Activated CD4-positive, alpha-beta memory T cell treated with anti-CD3 and anti-CD28 coated beads for 36 hours (primary cell): ENCODE measurements at regions of chr2 and their contacts with region 1.

Region 1: DNA sequence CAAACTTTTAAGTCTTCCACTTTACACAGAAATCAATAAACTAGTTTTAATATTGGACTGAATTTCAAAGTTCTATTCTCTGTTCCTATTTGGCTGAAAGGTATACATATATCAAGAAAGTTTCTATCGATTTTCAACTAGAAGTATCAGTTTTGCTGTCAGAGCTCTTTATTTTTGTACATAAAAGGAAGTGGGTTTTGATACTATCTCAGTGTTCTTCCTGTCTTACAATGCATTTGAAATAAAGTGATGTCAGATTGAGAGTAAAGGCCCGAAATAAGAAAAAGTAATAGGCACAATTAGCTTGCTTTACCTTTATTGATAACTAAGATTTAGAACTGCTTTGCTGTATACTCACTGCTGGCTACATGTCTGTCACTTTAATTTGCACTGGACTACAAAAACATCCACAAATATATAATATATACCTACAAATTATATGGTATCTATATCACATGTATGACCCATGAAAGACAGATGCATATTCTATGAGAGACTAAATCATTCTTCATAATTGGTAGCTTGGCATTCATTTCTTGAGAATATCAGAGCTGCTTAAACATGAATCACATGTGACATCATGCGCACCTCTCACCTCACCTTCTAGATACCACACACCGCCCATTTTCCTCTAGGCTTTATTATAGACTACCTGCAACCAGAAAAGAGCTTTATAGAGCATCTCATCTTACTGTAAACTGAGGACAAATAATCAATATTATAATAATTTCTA is 83.6 kb downstream of the ASXL2 start:
- DNase-seq: no peak
- H3K4me3 Mint-ChIP-seq: peak overlapping the region; percentile 66
- H3K27ac Mint-ChIP-seq: peak overlapping the region; percentile 81
- H3K4me1 Mint-ChIP-seq: peaks cover 77% of the 10 kb centered on the region
- H3K27me3 Mint-ChIP-seq: no peaks in the 10 kb centered on the region

Region 2: DNA sequence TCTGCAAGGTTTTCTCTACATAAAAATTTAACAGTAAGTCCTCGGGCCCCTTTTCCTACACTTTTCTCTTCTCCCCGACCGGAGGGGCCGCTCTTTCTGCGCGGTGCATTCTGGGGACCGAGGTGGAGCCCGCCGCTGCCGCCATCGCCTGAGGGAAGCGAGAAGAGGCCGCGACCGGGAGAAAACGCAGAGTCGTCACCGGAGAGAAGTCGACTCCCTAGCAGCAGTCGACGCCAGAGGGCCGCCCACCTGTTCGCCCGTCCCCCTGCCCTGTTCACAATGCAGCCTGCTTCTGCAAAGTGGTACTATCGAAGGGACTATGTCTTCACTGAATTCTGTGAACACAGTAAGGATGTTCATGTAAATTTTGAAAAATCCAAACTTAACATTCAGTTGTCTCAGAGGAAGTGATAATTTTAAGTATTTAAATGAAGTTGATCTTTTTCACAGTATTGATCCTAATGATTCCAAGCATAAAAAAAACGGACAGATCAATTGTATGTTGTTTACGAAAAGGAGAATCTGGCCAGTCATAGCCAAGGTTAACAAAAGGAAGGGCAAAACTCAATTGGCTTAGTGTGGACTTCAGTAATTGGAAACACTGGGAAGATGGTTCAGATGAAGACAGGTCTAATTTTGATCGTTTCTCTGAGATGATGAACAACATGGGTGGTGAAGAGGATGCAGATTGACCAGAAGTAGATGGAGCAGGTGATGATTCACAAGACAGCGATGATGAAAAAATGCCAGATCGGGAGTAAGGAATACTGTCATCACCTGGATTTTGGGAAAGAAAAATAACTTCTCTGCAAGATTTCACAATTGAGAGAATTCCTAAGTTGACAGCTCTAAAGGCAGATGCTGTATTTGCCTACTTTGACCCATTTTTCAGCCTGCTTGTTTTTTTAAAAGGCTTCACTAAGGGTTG is 27.7 kb after region 1 on chr2:
- CTCF ChIA-PET with region 1: interaction called, 9 read pairs
- POLR2A ChIA-PET with region 1: interaction called, 26 read pairs
- intact Hi-C with region 1: loop called (anchors 1 kb)
- DNase-seq: peak; percentile 77
- H3K4me3 Mint-ChIP-seq: peak overlapping the region; percentile 68
- H3K27ac Mint-ChIP-seq: peak overlapping the region; percentile 51
- H3K4me1 Mint-ChIP-seq: peaks cover 61% of the 10 kb centered on the region
- H3K27me3 Mint-ChIP-seq: peaks cover 1% of the 10 kb centered on the region

Region 3: DNA sequence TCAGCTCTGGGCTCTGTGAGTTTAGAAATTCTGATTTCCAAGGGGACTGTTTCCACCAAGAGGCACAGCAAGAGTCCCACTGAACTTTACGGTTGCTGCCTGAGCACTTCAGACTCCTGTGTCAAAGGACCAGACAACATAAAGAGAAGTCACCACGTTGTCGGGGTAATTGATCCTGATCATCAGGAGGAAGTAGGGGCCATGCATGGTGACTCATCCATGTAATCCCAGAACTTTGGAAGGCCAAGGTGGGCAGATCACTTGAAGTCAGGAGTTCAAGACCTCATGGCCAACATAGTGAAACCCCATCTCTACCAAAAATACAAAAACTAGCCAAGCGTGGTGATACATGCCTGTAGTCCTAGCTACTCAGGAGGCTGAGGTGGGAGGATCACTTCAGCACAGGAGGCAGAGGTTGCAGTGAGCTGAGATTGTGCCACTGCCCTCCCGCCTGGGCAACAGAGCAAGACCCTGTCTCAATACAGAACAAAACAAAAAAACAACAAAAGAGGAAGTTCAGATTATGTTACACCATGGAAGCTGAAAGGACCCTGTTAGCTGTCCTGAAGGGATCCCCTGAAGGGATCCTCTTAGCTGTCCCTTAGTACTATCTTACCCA is 93.0 kb after region 1 on chr2:
- CTCF ChIA-PET with region 1: no interaction called
- POLR2A ChIA-PET with region 1: no interaction called
- intact Hi-C with region 1: no loop called
- DNase-seq: no peak
- H3K4me3 Mint-ChIP-seq: no peak overlapping the region
- H3K27ac Mint-ChIP-seq: no peak overlapping the region
- H3K4me1 Mint-ChIP-seq: no peaks in the 10 kb centered on the region
- H3K27me3 Mint-ChIP-seq: peaks cover 1% of the 10 kb centered on the region

Region 4: GRCh38 chr2:26214759-26215158 is 420.0 kb after region 1 on chr2:
- CTCF ChIA-PET with region 1: no interaction called
- POLR2A ChIA-PET with region 1: no interaction called
- intact Hi-C with region 1: no loop called
- DNase-seq: no peak
- H3K4me3 Mint-ChIP-seq: no peak overlapping the region
- H3K27ac Mint-ChIP-seq: no peak overlapping the region
- H3K4me1 Mint-ChIP-seq: no peaks in the 10 kb centered on the region
- H3K27me3 Mint-ChIP-seq: no peaks in the 10 kb centered on the region